ENCODE measurements at regions of chr7 and their contacts with region 1.

Region 1: DNA sequence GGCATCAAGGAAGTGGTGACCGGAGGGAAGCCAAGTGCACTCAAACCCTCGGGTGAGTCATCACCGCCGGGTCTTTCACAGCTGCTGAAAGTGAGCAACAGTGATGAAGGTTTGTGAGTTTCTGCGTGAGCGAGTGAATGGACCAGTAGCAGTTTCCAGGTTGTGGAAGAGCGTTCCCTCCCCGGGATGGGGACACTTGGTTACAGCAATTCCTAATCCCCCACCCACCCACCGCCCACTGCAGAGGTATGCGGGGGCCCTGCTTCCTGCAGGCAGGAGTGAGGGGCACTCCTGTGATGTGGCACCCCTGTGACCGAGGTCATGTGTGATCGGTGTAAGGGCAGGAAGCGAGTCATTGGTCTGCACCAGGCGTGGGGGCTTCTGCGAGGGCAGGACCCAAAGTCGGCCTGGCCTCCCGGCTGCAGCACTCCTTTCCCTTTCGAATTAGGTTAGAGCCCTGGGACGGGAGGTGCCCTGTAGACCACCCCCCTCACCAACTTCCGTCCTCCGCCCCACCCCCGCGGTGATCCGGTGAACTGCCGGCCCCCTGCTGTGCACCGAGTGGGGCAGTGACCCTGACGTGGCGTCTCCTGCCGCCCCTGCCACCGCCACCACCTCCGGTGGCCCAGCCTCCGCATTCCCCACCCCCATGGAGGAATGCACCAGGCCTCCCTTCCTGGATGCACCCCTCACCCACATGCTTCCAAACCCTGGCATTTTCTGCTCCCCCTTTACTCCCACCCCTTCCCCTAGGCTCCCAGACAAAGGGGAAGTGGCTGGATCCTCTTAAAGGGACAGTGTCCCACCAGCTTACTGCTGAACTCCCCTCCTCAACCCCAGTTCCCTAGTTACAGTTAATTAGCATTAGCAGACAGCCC is 10.9 kb downstream of the LIMK1 start:
- DNase-seq: peak; percentile 79
- ATAC-seq: peak; percentile 83
- H3K4me3 Mint-ChIP-seq: peak overlapping the region; percentile 91
- H3K27ac Mint-ChIP-seq: peak overlapping the region; percentile 97
- H3K4me1 Mint-ChIP-seq: peaks cover 22% of the 10 kb centered on the region
- H3K27me3 Mint-ChIP-seq: no peaks in the 10 kb centered on the region

Region 2: GRCh38 chr7:74083117-74083876 is 11.2 kb before region 1 on chr7 and contains the start of gene LIMK1:
- POLR2A ChIA-PET with region 1: interaction called, 49 read pairs
- DNase-seq: peak; percentile 92
- ATAC-seq: peak; percentile 76
- H3K4me3 Mint-ChIP-seq: peak within 1 kb of the TSS; percentile 83
- H3K27ac Mint-ChIP-seq: peak within 1 kb of the TSS; percentile 85
- H3K4me1 Mint-ChIP-seq: peaks cover 11% of the 10 kb centered on the region
- H3K27me3 Mint-ChIP-seq: peaks cover 2% of the 10 kb centered on the region
- total RNA-seq, gene LIMK1: 33.3 to 36.2 TPM

Measured in activated naive CD8-positive, alpha-beta T cell treated with anti-CD3 and anti-CD28 coated beads, Interleukin-2, amount 10 ng/mL, durations not matched to agents 7 days and 5 days (primary cell).